Aorta (tissue), 5 donors: ENCODE measurements at regions of chr12 and their contacts with region 1.

Region 1: DNA sequence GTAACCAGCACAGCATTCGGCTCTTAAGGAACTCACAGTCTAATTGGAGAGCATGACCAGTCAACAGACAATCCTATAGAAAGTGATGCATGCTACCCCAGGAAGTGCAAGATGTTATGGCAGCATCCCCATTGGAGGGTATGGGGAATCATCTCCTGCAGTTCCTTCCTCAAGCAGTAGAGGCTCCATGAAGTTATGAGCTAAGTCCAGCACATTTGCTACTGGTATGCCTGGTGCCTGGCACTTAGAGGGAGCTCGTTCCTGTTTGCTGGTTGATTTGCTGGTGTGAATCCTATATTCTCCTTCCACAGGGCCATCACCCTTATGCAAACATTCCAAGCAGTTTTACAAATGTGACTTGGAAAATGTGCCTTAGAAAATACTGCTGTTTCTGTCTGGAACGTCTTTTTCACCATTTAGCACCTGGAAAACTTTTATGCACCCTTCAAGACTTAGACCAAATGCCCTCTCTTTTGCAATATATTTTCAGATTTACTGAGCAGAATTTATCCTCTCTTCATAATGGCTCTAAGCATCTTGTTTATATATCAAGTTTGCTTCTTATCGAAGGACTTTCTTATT is 136.1 kb upstream of the WSCD2 start:
- DNase-seq: no peak
- ATAC-seq: no peak
- H3K4me3 ChIP-seq: no peak overlapping the region
- H3K27ac ChIP-seq: no peak overlapping the region
- H3K4me1 ChIP-seq: no peaks in the 10 kb centered on the region
- H3K27me3 ChIP-seq: no peaks in the 10 kb centered on the region

Region 2: GRCh38 chr12:107929436-107929835 is 63.5 kb before region 1 on chr12:
- intact Hi-C with region 1: no loop called
- DNase-seq: no peak
- ATAC-seq: no peak
- H3K4me3 ChIP-seq: no peak overlapping the region
- H3K27ac ChIP-seq: no peak overlapping the region
- H3K4me1 ChIP-seq: no peaks in the 10 kb centered on the region
- H3K27me3 ChIP-seq: peaks cover 0 to 4% of the 10 kb centered on the region in 2 donors

Region 3: GRCh38 chr12:108052260-108052659 is 59.3 kb after region 1 on chr12:
- intact Hi-C with region 1: no loop called
- DNase-seq: no peak
- ATAC-seq: no peak
- H3K4me3 ChIP-seq: no peak overlapping the region
- H3K27ac ChIP-seq: no peak overlapping the region
- H3K4me1 ChIP-seq: no peaks in the 10 kb centered on the region
- H3K27me3 ChIP-seq: peaks cover 0 to 2% of the 10 kb centered on the region in 2 donors

Region 4: GRCh38 chr12:108193917-108194316 is 201.0 kb after region 1 on chr12:
- intact Hi-C with region 1: loop called (anchors 2 to 5 kb)
- DNase-seq: no peak
- ATAC-seq: no peak
- H3K4me3 ChIP-seq: no peak overlapping the region
- H3K27ac ChIP-seq: no peak overlapping the region
- H3K4me1 ChIP-seq: no peaks in the 10 kb centered on the region
- H3K27me3 ChIP-seq: no peaks in the 10 kb centered on the region